G401 (cell line): ENCODE measurements at regions of chr16 and their contacts with region 1.

Region 1: GRCh38 chr16:2513405-2514322 is at the start of gene ATP6V0C:
- DNase-seq: peak; percentile 90
- total RNA-seq, gene ATP6V0C: 17.4 and 41.8 TPM in 2 replicates

Region 2: DNA sequence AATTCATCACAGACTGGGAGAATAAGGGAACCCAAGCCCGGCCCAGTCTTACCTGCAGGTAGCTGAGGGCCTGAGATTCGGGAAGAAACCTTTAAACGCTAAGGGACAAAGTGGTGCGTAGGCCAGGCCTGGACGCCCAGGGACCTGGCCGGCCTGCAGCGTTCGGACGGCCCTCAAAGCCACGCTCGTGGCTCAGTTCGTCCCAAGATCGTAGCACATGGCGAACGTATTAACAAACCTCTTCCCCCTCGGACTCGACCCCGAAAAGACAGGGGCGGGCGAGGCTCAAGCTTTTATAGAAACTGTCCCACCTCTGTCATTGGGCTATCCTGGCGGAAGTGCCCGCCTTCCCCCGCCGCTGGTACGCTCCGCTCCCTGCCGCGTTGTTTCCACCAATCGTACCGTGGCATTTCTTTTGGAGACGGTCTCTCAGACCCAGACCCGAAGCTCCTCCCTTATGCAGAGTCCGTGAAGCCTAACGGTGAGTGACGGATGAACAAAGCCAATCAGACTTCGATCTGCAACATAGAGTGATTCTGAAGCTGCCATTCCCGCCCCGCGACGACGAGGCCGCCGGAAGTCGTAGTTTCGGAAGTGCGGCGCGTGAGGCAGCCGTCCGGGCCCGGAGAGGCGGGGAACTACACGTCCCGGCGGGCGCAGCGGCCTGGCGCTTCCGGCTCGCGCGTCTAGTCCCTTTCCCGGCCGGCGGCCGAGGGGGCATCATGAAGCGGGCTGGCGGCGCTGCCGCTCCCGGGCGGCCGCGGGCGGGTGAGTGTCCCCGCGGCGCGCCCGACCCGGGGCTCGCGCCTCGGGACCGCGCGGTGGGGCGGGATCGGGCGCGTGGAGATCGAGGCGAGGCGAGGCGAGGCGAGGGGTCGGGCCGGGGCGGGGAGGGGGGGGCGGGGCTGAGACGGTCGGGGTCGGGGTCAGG is 358.3 kb before region 1 on chr16 and contains the start of gene TRAF7:
- in situ Hi-C with region 1: loop called (anchors 25 kb)
- DNase-seq: peak; percentile 100
- total RNA-seq, gene TRAF7: 76.1 and 99.9 TPM in 2 replicates

Region 3: GRCh38 chr16:2734844-2735515 is 221.3 kb after region 1 on chr16:
- in situ Hi-C with region 1: no loop called
- DNase-seq: no peak